K562 (cell line): ENCODE measurements at regions of chr3 and their contacts with region 1.

Region 1: GRCh38 chr3:39158148-39158715 is 4.8 kb upstream of the CSRNP1 start:
- DNase-seq: no peak
- ATAC-seq: no peak
- H3K4me3 ChIP-seq: no peak overlapping the region
- H3K27ac ChIP-seq: no peak overlapping the region
- H3K4me1 ChIP-seq: peaks cover 14 to 19% of the 10 kb centered on the region in 2 experiments
- H3K27me3 ChIP-seq: no peaks in the 10 kb centered on the region; a peak in 1 of 5 replicates
- CTCF ChIP-seq: no peak
- EP300 ChIP-seq: no peak
- POLR2A ChIP-seq: no peak
- RAD21 ChIP-seq: no peak

Region 2: GRCh38 chr3:39146984-39147591 is 11.1 kb before region 1 on chr3:
- CTCF ChIA-PET with region 1: no interaction called
- POLR2A ChIA-PET with region 1: interaction called, 10 read pairs
- in situ Hi-C with region 1: no loop called
- intact Hi-C with region 1: no loop called
- DNase-seq: peak in 2 of 4 experiments; percentile 56 to 84
- ATAC-seq: peak; percentile 33
- H3K4me3 ChIP-seq: no peak overlapping the region; the same call in 1 of the 2 replicates
- H3K27ac ChIP-seq: peak overlapping the region; percentile 35
- H3K4me1 ChIP-seq: peaks cover 54 to 56% of the 10 kb centered on the region in 2 experiments
- H3K27me3 ChIP-seq: no peaks in the 10 kb centered on the region; a peak in 1 of 5 replicates
- CTCF ChIP-seq: no peak
- EP300 ChIP-seq: no peak
- POLR2A ChIP-seq: no peak; the same call in 1 of the 2 replicates
- RAD21 ChIP-seq: no peak